ENCODE measurements at regions of chr7 and their contacts with region 1.

Region 1: DNA sequence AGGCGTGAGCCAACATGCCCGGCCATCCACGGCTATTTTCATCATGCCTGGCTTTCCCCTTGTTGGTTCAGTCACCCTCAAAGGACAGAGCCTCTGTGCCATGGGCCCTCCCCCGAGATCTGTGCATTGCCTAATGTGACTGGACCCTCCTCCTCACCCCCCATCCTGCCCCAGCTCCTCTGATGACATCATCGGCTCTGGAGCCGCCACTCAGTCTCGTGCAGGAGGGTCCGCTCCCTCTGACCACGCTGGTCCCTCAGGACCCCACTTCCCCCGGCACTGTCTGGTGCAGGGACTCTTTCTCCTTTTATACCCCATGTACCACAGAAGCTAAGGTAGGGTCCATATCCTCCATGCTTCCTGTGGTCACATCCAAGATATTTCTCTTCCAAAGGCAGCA is 33.2 kb upstream of the BAIAP2L1 start:
- DNase-seq: no peak
- H3K4me3 ChIP-seq: no peak overlapping the region
- H3K27ac ChIP-seq: no peak overlapping the region
- H3K4me1 ChIP-seq: no peaks in the 10 kb centered on the region
- H3K27me3 ChIP-seq: peaks cover 0 to 4% (median 0%) of the 10 kb centered on the region in 4 donors
- CTCF ChIP-seq: no peak
- EP300 ChIP-seq: no peak
- POLR2A ChIP-seq: no peak

Region 2: GRCh38 chr7:98841179-98841997 is 407.3 kb after region 1 on chr7:
- intact Hi-C with region 1: loop called (anchors 1 kb)
- DNase-seq: no peak
- H3K4me3 ChIP-seq: no peak overlapping the region
- H3K27ac ChIP-seq: no peak overlapping the region
- H3K4me1 ChIP-seq: peaks cover 0 to 3% (median 0%) of the 10 kb centered on the region in 4 donors
- H3K27me3 ChIP-seq: peaks cover 0 to 35% (median 0%) of the 10 kb centered on the region in 4 donors
- CTCF ChIP-seq: peak in 2 of 3 experiments; percentile 92 to 96
- EP300 ChIP-seq: no peak
- POLR2A ChIP-seq: no peak

Measured in esophagus muscularis mucosa (tissue), 4 donors.